Right lobe of liver (tissue), 6 donors: ENCODE measurements at regions of chr6 and their contacts with region 1.

Region 1: DNA sequence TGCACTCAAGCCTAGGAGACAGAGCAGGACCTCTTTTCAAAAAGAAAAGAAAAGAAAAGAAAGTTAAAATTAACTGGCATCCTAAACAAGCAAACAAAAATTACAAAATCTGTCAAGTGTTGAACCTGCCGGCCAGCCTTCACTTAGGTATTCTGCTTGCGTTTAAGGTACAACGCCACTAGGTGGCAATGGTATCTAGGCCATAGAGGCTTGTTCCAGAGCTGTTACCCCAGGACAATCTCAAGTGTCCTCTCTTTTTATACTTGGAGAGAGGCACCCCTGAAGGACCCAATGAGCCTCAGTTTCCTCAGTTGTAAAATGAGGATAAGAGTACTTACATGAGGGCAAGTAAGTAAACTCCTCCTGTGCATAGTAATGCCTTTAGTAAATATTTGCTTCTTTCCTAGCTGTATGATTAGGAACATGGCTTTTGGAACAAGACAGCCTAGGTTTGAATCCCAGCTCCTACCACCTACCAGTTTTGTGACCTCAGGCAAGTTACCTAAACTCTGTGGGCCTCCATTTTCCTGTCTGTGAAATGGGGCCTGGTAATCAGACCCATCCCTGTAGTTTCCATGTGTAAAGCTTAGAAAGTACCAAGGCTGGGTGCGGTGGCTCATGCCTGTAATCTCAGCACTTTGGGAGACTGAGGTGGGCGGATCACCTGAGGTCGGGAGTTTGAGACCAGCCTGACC is 5.8 kb upstream of the PACSIN1 start:
- DNase-seq: peak in 1 of 3 donors; percentile 62
- ATAC-seq: peak; percentile 81 to 92 (median 86)
- H3K4me3 ChIP-seq: no peak overlapping the region
- H3K27ac ChIP-seq: no peak overlapping the region
- H3K4me1 ChIP-seq: no peaks in the 10 kb centered on the region
- H3K27me3 ChIP-seq: no peaks in the 10 kb centered on the region
- CTCF ChIP-seq: peak; percentile 65 to 83 (median 78)
- POLR2A ChIP-seq: no peak

Region 2: DNA sequence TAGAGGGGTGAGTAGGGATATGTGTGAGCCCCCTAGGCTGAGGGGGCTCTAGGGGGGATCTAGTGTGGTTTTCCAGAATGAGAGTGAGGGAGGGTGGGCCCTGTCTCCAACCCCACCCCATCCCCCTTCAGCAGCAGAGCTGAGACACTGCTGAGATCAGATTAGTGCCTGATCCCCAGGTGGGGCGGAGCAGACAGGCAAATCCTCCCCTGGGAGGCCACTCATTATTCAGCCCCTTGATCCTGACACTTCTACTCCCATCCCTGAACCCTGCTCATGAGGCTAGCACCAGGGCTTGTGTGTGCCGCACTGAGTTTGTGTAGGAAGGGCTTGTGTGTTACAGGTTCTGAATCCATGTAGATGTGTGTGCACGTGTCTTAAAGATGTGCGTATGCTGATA is 53.6 kb after region 1 on chr6:
- intact Hi-C with region 1: no loop called
- DNase-seq: peak in 1 of 3 donors; percentile 24
- ATAC-seq: no peak
- H3K4me3 ChIP-seq: no peak overlapping the region
- H3K27ac ChIP-seq: no peak overlapping the region
- H3K4me1 ChIP-seq: no peaks in the 10 kb centered on the region
- H3K27me3 ChIP-seq: no peaks in the 10 kb centered on the region
- CTCF ChIP-seq: no peak
- POLR2A ChIP-seq: no peak

Region 3: DNA sequence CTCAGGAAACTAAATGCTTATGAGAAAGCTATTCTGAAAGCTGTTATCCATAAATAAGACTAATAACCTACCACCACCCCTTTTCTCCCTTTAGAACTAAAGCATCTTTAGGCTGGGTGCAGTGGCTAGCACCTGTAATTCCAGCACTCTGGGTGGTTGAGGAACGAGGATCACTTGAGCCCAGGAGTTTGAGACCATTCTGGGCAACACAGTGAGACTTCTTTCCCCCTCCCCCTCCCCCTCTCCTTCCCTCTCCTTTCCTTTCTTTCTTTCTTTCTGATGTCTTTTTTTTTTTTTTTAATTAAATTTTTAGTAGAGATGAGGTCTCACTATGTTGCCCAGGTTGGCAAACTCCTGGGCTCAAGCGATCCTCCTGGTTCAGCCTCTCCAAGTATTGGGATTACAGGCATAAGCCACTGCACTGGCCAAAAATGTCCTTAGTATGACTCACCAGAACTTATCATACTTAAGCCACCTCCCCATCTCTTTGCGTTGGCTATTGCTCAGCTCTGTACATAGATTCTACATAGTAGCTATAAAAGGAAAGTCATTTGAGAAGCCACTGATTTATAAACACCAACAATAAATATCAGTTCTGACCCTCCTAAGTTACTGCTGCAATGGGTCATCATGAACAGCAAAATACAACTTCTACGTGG is 150.9 kb after region 1 on chr6:
- intact Hi-C with region 1: loop called in 1 of 2 experiments (anchors 10 kb)
- DNase-seq: no peak
- ATAC-seq: peak in 1 of 4 donors; percentile 40
- H3K4me3 ChIP-seq: no peak overlapping the region
- H3K27ac ChIP-seq: peak overlapping the region in 1 of 3 donors; percentile 24
- H3K4me1 ChIP-seq: peaks cover 0 to 40% (median 13%) of the 10 kb centered on the region in 4 donors
- H3K27me3 ChIP-seq: no peaks in the 10 kb centered on the region
- CTCF ChIP-seq: no peak
- POLR2A ChIP-seq: no peak